SK-N-SH (cell line): ENCODE measurements at regions of chr1 and their contacts with region 1.

Region 1: DNA sequence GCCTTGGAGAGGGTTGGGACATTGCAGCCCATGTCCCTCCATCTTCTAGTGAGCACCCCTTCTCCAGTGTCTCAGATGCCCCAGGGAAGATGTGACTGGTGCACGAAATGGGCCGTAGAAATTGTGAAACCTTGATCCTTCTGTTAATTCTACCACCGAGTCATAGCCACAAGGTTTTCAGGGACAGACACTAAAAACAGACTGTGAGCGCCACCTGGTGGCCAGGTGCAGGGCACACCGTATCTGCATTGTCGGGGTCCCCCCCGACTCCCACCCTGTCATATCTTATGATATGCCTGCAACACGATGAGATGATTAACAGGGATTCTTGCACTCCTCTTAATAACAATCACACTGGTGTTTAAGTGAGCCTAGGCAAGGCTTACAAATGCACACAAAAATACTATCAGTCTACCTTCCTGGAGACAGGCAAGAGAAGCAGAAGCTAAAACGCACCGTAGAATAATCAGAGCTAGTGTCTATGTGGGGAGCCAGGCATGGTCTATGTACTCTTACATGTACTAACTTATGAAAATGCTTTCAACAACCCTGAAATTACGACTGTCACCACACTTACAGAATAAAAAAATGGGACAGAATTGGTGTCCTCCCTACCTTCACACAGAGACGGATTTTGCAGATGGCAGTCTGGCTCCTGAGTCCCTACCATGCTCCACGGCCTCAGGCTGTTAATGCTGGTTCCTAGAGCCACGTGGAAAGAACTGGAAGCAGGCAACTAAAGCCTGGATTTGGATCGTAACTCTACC is 57.9 kb downstream of the FHAD1 start:
- DNase-seq: peak; percentile 79
- H3K4me3 ChIP-seq: peak overlapping the region in 1 of 2 experiments; percentile 38; a peak in 1 of 4 replicates
- H3K27ac ChIP-seq: no peak overlapping the region
- H3K4me1 ChIP-seq: peaks cover 0 to 6% of the 10 kb centered on the region in 2 experiments; a peak in 1 of 4 replicates
- H3K27me3 ChIP-seq: no peaks in the 10 kb centered on the region
- CTCF ChIP-seq: peak; percentile 94
- EP300 ChIP-seq: no peak
- RAD21 ChIP-seq: peak; percentile 84

Region 2: DNA sequence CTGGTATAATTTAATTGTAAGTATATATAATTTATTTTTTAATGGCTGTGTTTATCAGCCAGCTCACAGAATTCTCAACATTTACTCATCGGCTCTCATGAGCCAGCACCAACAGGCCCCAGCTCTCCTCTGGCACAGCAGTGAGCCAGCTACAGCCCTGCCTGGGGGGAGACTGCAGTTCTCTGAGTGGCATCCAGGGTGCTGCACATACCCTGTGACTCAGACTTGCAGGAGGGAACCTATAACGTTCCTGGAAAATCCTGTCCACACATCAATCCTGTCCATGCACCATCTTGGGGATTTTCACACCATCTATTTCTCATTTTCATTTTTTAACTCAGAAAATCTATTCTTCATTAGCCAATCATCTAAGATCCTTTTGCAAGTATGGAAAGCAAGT is 21.4 kb before region 1 on chr1:
- CTCF ChIA-PET with region 1: interaction called, 17 read pairs
- POLR2A ChIA-PET with region 1: no interaction called
- DNase-seq: peak; percentile 75
- H3K4me3 ChIP-seq: no peak overlapping the region
- H3K27ac ChIP-seq: peak overlapping the region in 1 of 2 experiments; percentile 55; a peak in 1 of 4 replicates
- H3K4me1 ChIP-seq: peaks cover 0 to 14% of the 10 kb centered on the region in 2 experiments; a peak in 1 of 4 replicates
- H3K27me3 ChIP-seq: no peaks in the 10 kb centered on the region
- CTCF ChIP-seq: peak; percentile 38
- EP300 ChIP-seq: no peak
- RAD21 ChIP-seq: 0 out of 2 replicates have a peak, but pooled peaks have one; percentile 14

Region 3: GRCh38 chr1:15290382-15290781 is 14.5 kb before region 1 on chr1:
- CTCF ChIA-PET with region 1: interaction called, 18 read pairs
- POLR2A ChIA-PET with region 1: no interaction called
- DNase-seq: no peak
- H3K4me3 ChIP-seq: no peak overlapping the region
- H3K27ac ChIP-seq: no peak overlapping the region
- H3K4me1 ChIP-seq: no peaks in the 10 kb centered on the region
- H3K27me3 ChIP-seq: no peaks in the 10 kb centered on the region
- CTCF ChIP-seq: no peak
- EP300 ChIP-seq: no peak
- RAD21 ChIP-seq: no peak